A549 (cell line): ENCODE measurements at regions of chr13 and their contacts with region 1.

Region 1: GRCh38 chr13:98445340-98446233 is 131.3 kb downstream of the STK24 start:
- DNase-seq: peak; percentile 51 to 55
- ATAC-seq: peak; percentile 77 to 91
- H3K4me3 ChIP-seq: no peak overlapping the region
- H3K27ac ChIP-seq: peak overlapping the region; percentile 31 to 70; a peak in 3 of 6 replicates
- H3K4me1 ChIP-seq: peaks cover 17% of the 10 kb centered on the region; the same call in 1 of the 3 replicates
- CTCF ChIP-seq: peak; percentile 75
- EP300 ChIP-seq: no peak
- POLR2A ChIP-seq: no peak
- RAD21 ChIP-seq: peak; percentile 71 to 82

Region 2: DNA sequence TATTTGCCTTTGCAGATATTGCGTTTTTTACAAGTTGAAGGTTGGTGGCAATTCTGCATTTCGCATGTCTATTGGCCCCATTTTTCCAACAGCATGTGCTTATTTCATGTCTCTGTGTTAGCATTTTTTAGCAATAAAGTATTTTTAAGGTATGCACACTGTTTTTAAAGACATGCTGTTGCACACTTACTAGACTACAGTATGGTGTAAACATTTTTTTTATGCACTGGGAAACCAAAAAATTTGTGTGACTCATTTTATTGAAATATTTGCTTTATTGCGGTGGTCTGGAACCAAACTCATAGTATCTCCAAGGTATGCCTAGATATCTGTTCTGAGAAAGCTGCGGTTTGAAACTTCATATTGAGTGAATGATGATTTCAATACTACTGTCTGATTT is 213.1 kb before region 1 on chr13:
- CTCF ChIA-PET with region 1: no interaction called
- POLR2A ChIA-PET with region 1: no interaction called
- DNase-seq: no peak
- ATAC-seq: no peak
- H3K4me3 ChIP-seq: no peak overlapping the region
- H3K27ac ChIP-seq: no peak overlapping the region
- H3K4me1 ChIP-seq: 0 out of 3 replicates have a peak, but pooled peaks cover 2% of the 10 kb centered on the region
- CTCF ChIP-seq: no peak
- EP300 ChIP-seq: no peak
- POLR2A ChIP-seq: no peak
- RAD21 ChIP-seq: no peak

Region 3: GRCh38 chr13:98416345-98416845 is 29.2 kb before region 1 on chr13:
- CTCF ChIA-PET with region 1: no interaction called
- POLR2A ChIA-PET with region 1: no interaction called
- DNase-seq: no peak
- ATAC-seq: no peak
- H3K4me3 ChIP-seq: no peak overlapping the region
- H3K27ac ChIP-seq: no peak overlapping the region
- H3K4me1 ChIP-seq: no peaks in the 10 kb centered on the region
- CTCF ChIP-seq: no peak
- EP300 ChIP-seq: no peak
- POLR2A ChIP-seq: no peak
- RAD21 ChIP-seq: no peak

Region 4: GRCh38 chr13:98466634-98467236 is 21.1 kb after region 1 on chr13:
- CTCF ChIA-PET with region 1: interaction called, 21 read pairs
- POLR2A ChIA-PET with region 1: no interaction called
- DNase-seq: peak; percentile 55 to 58
- ATAC-seq: peak; percentile 84 to 94
- H3K4me3 ChIP-seq: no peak overlapping the region
- H3K27ac ChIP-seq: no peak overlapping the region
- H3K4me1 ChIP-seq: no peaks in the 10 kb centered on the region
- CTCF ChIP-seq: peak; percentile 52; the same call in 2 of the 3 replicates
- EP300 ChIP-seq: no peak
- POLR2A ChIP-seq: no peak
- RAD21 ChIP-seq: peak in 1 of 2 experiments; percentile 33; a peak in 2 of 5 replicates

Region 5: GRCh38 chr13:98484289-98485219 is 39.0 kb after region 1 on chr13:
- CTCF ChIA-PET with region 1: interaction called, 15 read pairs
- POLR2A ChIA-PET with region 1: no interaction called
- DNase-seq: peak; percentile 91 to 96
- ATAC-seq: peak; percentile 93 to 98
- H3K4me3 ChIP-seq: peak overlapping the region; percentile 26; the same call in 2 of the 3 replicates
- H3K27ac ChIP-seq: peak overlapping the region; percentile 93 to 98
- H3K4me1 ChIP-seq: peaks cover 71% of the 10 kb centered on the region
- CTCF ChIP-seq: no peak
- EP300 ChIP-seq: peak; percentile 69 to 87; a peak in 3 of 5 replicates
- POLR2A ChIP-seq: no peak
- RAD21 ChIP-seq: peak; percentile 26 to 45

Region 6: DNA sequence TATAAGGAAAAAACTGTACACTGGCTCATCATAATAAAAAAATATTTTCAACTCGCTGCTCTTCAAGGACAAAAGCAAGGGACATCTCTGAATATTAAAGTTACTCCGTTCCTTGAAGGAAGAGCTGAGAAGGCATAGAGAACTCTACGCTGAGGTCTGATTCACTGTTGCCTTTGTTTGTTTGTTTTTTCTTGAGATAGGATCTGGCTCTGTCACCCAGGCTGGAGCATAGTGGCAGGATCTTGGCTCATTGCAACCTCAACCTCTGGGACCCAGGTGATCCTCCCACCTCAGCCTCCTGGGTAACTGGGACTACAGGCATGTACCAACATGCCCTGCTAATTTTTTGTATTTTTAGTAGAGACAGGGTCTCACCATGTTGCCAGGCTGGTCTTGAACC is 213.9 kb after region 1 on chr13:
- CTCF ChIA-PET with region 1: interaction called, 78 read pairs
- POLR2A ChIA-PET with region 1: no interaction called
- DNase-seq: no peak
- ATAC-seq: no peak
- H3K4me3 ChIP-seq: no peak overlapping the region
- H3K27ac ChIP-seq: no peak overlapping the region
- H3K4me1 ChIP-seq: peaks cover 6% of the 10 kb centered on the region; the same call in 2 of the 3 replicates
- CTCF ChIP-seq: no peak
- EP300 ChIP-seq: no peak
- POLR2A ChIP-seq: no peak
- RAD21 ChIP-seq: no peak

Region 7: GRCh38 chr13:98842864-98843481 is 397.4 kb after region 1 on chr13:
- CTCF ChIA-PET with region 1: interaction called, 12 read pairs
- POLR2A ChIA-PET with region 1: no interaction called
- DNase-seq: peak; percentile 28 to 73
- ATAC-seq: peak; percentile 83 to 92
- H3K4me3 ChIP-seq: no peak overlapping the region
- H3K27ac ChIP-seq: no peak overlapping the region
- H3K4me1 ChIP-seq: peaks cover 8% of the 10 kb centered on the region; the same call in 2 of the 3 replicates
- CTCF ChIP-seq: peak; percentile 73
- EP300 ChIP-seq: no peak
- POLR2A ChIP-seq: no peak
- RAD21 ChIP-seq: peak; percentile 78 to 83